HepG2 (cell line): ENCODE measurements at regions of chrX and their contacts with region 1.

Region 1: GRCh38 chrX:106933041-106933961 is 13.1 kb downstream of the CLDN2 start:
- DNase-seq: peak; percentile 89
- ATAC-seq: peak; percentile 77
- H3K4me3 ChIP-seq: peak overlapping the region; percentile 19 to 58 (median 45); a peak in 5 of 6 replicates
- H3K27ac ChIP-seq: peak overlapping the region; percentile 90
- H3K4me1 ChIP-seq: peaks cover 50% of the 10 kb centered on the region
- H3K27me3 ChIP-seq: no peaks in the 10 kb centered on the region
- CTCF ChIP-seq: no peak
- EP300 ChIP-seq: peak in 1 of 2 experiments; percentile 82; a peak in 1 of 4 replicates
- POLR2A ChIP-seq: peak in 1 of 2 experiments; percentile 6; a peak in 1 of 4 replicates
- RAD21 ChIP-seq: no peak

Region 2: DNA sequence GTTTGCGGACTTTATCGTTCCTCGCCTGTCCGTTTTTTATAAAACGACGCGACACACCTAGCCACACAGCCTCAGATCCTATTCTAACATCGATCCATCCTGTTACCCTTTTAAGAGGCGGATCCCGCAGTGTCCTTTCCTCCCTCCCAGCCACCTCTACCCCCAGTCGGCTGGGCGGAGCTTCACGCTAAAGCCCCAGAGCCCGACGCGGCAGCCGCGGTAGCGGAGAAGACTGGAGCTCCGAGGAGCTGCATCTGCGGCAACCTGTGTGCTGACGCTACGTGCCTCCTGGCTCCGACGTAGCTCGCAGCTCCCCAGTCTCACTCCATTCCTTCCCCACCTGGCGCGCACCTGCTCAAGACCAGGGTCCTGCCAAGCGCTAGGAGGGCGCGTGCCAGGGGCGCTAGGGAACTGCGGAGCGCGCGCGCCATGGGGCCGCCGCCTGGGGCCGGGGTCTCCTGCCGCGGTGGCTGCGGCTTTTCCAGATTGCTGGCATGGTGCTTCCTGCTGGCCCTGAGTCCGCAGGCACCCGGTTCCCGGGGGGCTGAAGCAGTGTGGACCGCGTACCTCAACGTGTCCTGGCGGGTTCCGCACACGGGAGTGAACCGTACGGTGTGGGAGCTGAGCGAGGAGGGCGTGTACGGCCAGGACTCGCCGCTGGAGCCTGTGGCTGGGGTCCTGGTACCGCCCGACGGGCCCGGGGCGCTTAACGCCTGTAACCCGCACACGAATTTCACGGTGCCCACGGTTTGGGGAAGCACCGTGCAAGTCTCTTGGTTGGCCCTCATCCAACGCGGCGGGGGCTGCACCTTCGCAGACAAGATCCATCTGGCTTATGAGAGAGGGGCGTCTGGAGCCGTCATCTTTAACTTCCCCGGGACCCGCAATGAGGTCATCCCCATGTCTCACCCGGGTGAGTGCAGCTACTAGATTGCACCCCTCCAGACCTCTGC is 206.5 kb before region 1 on chrX and contains the start of gene RNF128:
- CTCF ChIA-PET with region 1: no interaction called
- POLR2A ChIA-PET with region 1: no interaction called
- in situ Hi-C with region 1: no loop called
- intact Hi-C with region 1: no loop called
- DNase-seq: peak; percentile 66
- ATAC-seq: peak; percentile 95
- H3K4me3 ChIP-seq: peak within 1 kb of the TSS; percentile 82 to 88 (median 85)
- H3K27ac ChIP-seq: peak within 1 kb of the TSS; percentile 77
- H3K4me1 ChIP-seq: peaks cover 8% of the 10 kb centered on the region
- H3K27me3 ChIP-seq: no peaks in the 10 kb centered on the region; a peak in 1 of 5 replicates
- CTCF ChIP-seq: no peak
- EP300 ChIP-seq: no peak
- POLR2A ChIP-seq: peak; percentile 84 to 93
- RAD21 ChIP-seq: no peak
- total RNA-seq, gene RNF128: 9.7 and 18.5 TPM in 2 replicates

Region 3: DNA sequence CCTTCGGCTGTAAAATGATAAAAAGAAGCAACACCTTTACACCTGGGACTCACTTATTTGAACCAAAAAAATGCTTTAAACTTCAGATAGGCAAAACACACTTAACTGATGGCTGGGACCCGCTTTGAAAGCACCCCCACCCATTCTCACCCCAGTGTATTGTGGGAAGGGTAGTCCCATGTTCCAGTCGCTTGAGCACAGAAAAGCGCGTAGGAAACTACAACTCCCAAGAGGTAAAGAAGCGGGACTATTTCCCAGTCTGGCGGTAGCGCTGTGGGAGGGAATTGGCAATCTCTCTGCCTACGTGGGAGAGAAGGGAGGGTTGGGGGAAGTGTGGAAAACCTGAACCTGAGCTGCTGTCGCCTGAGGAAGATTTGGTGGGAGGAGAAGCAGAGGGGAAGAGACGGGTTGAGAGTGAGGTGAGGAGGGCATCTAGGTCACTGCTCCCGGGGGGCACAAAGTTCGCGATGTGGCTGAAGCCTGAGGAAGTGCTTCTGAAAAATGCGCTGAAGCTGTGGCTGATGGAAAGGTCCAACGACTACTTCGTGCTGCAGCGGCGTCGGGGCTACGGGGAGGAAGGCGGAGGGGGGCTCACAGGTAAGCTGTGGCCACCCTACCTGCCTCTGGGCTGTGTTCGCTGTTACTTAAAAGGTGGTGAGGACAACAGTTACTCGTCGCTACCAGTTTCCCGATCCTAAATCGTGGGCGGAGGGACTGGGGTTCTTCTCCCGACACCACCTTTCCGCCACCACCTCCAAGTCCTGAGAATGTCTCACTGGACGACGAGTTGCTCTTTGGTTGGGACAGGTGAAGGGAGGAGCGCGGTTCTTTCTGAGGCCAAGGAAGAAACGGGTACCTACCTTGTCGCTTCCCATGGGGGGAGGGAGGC is 130.7 kb before region 1 on chrX and contains the start of gene TBC1D8B:
- CTCF ChIA-PET with region 1: no interaction called
- POLR2A ChIA-PET with region 1: no interaction called
- in situ Hi-C with region 1: no loop called
- intact Hi-C with region 1: no loop called
- DNase-seq: peak; percentile 89
- ATAC-seq: peak; percentile 98
- H3K4me3 ChIP-seq: peak within 1 kb of the TSS; percentile 74 to 83 (median 80)
- H3K27ac ChIP-seq: peak within 1 kb of the TSS; percentile 77
- H3K4me1 ChIP-seq: peaks cover 41% of the 10 kb centered on the region
- H3K27me3 ChIP-seq: no peaks in the 10 kb centered on the region
- CTCF ChIP-seq: no peak
- EP300 ChIP-seq: no peak
- POLR2A ChIP-seq: peak in 1 of 2 experiments; percentile 59; a peak in 1 of 4 replicates
- RAD21 ChIP-seq: no peak
- total RNA-seq, gene TBC1D8B: 7.2 and 11.6 TPM in 2 replicates

Region 4: DNA sequence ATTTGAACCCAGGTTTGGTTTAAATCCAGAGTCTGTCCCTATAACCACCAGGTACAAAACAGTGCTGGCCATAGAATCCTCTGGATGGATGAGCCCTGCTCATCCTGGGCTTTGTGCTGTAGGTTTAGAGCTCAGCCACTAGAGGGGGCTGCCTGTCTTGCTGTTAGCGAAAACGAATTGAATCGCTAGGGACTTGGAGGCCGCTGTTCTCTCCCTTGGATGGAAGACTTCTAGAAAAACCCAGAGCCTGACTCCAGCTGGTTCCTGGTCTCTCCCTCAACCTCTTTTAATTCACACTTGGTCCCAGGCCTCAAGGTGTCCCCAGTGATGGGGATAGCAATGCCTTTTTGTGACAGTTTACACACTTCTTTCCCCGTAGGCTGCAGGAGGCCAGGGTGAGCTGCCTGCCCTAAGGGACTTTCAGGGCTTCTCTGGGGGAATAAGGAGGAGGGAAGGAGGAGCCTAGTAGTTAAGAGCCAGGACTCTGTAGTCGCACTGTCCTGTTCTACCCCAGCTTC is 38.9 kb before region 1 on chrX:
- CTCF ChIA-PET with region 1: interaction called, 4 read pairs
- POLR2A ChIA-PET with region 1: interaction called, 76 read pairs
- in situ Hi-C with region 1: no loop called
- intact Hi-C with region 1: loop called (anchors 1 kb)
- DNase-seq: peak; percentile 60
- ATAC-seq: peak; percentile 89
- H3K4me3 ChIP-seq: peak overlapping the region in 1 of 3 experiments; percentile 46; a peak in 2 of 6 replicates
- H3K27ac ChIP-seq: no peak overlapping the region
- H3K4me1 ChIP-seq: peaks cover 30% of the 10 kb centered on the region
- H3K27me3 ChIP-seq: no peaks in the 10 kb centered on the region
- CTCF ChIP-seq: peak; percentile 85
- EP300 ChIP-seq: no peak
- POLR2A ChIP-seq: no peak
- RAD21 ChIP-seq: peak; percentile 76

Region 5: GRCh38 chrX:106903291-106903824 is 29.9 kb before region 1 on chrX and contains the start of gene RIPPLY1:
- CTCF ChIA-PET with region 1: interaction called, 4 read pairs
- POLR2A ChIA-PET with region 1: interaction called, 76 read pairs
- in situ Hi-C with region 1: no loop called
- intact Hi-C with region 1: loop called (anchors 1 kb)
- DNase-seq: no peak
- ATAC-seq: no peak
- H3K4me3 ChIP-seq: peak within 1 kb of the TSS in 2 of 3 experiments; percentile 12 to 18; a peak in 1 of 6 replicates
- H3K27ac ChIP-seq: peak within 1 kb of the TSS; percentile 87
- H3K4me1 ChIP-seq: peaks cover 84% of the 10 kb centered on the region
- H3K27me3 ChIP-seq: no peaks in the 10 kb centered on the region
- CTCF ChIP-seq: no peak
- EP300 ChIP-seq: no peak
- POLR2A ChIP-seq: no peak
- RAD21 ChIP-seq: no peak
- total RNA-seq, gene RIPPLY1: 0.49 and 0.86 TPM in 2 replicates